Activated CD8-positive, alpha-beta T cell treated with anti-CD3 and anti-CD28 coated beads for 36 hours (primary cell): ENCODE measurements at regions of chr22 and their contacts with region 1.

Region 1: GRCh38 chr22:19122143-19122751 is at the start of gene DGCR2:
- DNase-seq: peak; percentile 97
- ATAC-seq: peak; percentile 99
- H3K4me3 Mint-ChIP-seq: peak within 1 kb of the TSS; percentile 92
- H3K27ac Mint-ChIP-seq: peak within 1 kb of the TSS; percentile 83
- H3K4me1 Mint-ChIP-seq: peaks cover 37% of the 10 kb centered on the region
- H3K27me3 Mint-ChIP-seq: no peaks in the 10 kb centered on the region
- CTCF ChIP-seq: no peak
- total RNA-seq, gene DGCR2: 18.0 to 20.0 TPM

Region 2: GRCh38 chr22:19085233-19085718 is 37.0 kb before region 1 on chr22:
- CTCF ChIA-PET with region 1: no interaction called
- POLR2A ChIA-PET with region 1: no interaction called
- intact Hi-C with region 1: no loop called
- DNase-seq: no peak
- ATAC-seq: no peak
- H3K4me3 Mint-ChIP-seq: no peak overlapping the region
- H3K27ac Mint-ChIP-seq: no peak overlapping the region
- H3K4me1 Mint-ChIP-seq: peaks cover 11% of the 10 kb centered on the region
- H3K27me3 Mint-ChIP-seq: no peaks in the 10 kb centered on the region
- CTCF ChIP-seq: peak; percentile 15

Region 3: DNA sequence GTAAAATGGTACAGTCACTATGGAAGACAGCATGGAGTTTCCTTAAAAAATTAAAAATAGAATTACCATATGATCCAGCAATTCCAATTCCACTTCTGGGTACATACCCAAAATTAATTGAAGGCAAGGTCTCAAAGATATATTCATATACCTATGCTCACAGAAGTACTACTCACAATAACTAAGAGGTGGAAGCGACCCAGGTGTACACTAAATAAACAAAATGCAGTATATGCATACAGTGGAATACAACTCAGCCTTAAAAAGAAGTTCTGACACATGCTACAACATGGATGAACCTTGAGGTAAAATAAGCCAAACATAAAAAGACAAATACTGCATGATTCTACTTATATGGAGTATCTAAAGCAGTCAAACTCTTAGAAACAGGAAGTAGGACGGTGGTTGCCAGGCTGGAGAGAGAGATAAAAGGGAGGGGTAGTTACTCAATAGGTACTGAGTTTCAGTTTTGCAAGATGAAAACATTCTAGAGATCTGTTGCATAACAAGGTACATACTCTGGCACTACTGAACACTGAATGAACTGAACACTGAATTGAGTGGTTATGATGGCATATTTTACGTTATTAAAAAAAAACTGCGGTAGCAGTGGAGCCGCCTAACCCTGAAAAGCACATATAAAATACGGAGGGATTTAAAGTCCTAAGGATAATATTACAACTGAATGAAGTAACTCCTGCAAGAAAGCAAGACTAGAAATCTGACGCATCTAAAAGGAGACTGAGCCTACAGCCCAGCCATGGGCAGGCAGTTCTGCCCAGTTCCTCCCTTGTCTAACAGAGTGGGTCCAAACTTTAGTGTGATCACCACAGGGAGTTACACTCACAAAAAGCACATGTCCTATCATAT is 12.8 kb before region 1 on chr22:
- CTCF ChIA-PET with region 1: interaction called, 5 read pairs
- POLR2A ChIA-PET with region 1: interaction called, 17 read pairs
- intact Hi-C with region 1: no loop called
- DNase-seq: peak; percentile 73
- ATAC-seq: peak; percentile 88
- H3K4me3 Mint-ChIP-seq: peak overlapping the region; percentile 38
- H3K27ac Mint-ChIP-seq: peak overlapping the region; percentile 65
- H3K4me1 Mint-ChIP-seq: peaks cover 62% of the 10 kb centered on the region
- H3K27me3 Mint-ChIP-seq: no peaks in the 10 kb centered on the region
- CTCF ChIP-seq: no peak

Region 4: GRCh38 chr22:19240813-19241592 is 118.8 kb after region 1 on chr22:
- CTCF ChIA-PET with region 1: no interaction called
- POLR2A ChIA-PET with region 1: no interaction called
- intact Hi-C with region 1: no loop called
- DNase-seq: no peak
- ATAC-seq: no peak
- H3K4me3 Mint-ChIP-seq: no peak overlapping the region
- H3K27ac Mint-ChIP-seq: no peak overlapping the region
- H3K4me1 Mint-ChIP-seq: no peaks in the 10 kb centered on the region
- H3K27me3 Mint-ChIP-seq: no peaks in the 10 kb centered on the region
- CTCF ChIP-seq: no peak